HEK293T (cell line): ENCODE measurements at regions of chr22 and their contacts with region 1.

Region 1: DNA sequence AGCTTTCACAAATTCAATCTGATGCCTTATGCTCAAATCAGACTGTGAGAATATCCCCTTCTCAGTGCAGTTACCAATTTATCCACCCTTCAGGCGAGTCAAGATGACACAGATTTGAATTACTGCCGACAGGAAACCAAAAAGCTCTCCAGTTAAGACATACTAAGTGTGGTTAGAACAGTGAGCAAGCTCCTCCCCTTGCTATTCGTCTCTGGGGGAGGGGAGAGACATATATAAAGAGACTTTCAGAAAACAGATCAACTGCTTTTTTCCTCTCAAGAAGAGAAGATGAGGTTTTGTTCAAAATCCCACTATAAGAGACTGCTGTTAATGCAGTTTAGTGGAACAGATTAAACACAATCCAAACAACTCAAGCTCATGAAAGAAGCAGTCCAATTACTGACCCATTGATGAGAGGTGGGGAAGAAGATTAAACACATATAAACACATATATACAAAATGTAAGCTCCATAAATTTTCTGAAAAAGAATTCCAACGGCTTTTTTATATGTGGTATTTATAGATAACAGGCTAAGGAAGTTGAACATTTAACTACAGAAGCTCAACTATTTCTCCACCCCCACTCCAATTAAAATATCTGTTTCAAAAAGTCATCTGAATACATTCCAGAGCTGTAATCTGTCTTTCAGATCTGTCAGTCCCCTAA is 102.7 kb downstream of the MRTFA start:
- DNase-seq: peak; percentile 45

Region 2: DNA sequence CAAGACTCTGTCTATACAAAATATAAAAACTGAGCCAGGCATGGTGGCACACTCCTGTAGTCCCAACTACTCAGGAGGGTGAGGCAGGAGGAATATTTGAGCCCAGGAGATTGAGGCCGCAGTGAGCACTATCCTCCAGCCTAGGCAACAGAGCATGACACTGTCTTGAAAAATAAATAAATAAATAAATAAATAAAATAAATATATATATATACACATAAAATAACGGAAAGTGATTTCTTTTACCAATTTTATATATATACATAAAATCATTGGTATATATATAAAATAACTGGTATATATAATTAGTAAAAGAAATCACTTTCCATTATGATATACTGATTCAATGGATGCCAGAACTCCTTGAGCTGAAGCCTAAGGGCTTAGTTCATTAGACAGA is 10.9 kb after region 1 on chr22:
- CTCF ChIA-PET with region 1: no interaction called
- POLR2A ChIA-PET with region 1: no interaction called
- DNase-seq: no peak

Region 3: DNA sequence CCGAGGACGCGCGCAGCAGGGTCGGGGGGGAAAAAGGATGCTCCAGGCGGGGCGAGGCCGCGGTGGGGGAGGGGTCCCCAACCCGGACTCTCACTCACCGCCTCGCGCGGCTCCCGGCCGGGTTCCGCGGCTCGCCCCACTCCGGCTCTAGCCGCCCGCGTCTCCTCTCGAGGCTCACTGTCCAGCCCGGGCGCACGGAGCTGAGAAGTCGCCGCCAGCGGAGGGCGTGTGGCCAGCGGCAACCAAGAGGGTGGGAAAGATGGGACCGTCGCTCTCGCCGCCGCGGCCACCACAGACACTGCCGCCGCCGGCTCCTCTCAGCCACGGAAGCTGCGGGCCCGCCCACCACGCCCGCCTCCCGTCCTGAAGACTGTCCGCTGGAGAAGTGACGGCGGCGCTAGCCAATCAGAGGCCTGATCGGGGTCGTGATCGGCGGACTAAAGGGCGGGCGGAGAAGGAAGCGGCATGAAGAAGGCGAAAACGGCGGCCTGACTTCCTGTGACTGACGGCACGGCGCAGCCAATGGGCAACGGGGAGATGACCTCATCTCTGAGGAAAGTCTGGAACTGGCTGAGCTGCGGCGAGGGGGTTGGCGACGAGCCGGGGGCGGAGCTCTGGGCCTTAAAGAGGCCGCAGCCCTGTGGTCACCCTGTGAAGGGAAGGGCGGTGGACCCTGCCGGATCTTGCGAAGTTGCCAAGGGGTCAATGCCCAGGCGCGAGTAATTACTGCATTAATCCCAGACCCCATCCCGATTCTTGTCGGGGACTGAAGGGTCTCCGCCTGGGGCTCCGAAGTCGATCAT is 102.7 kb after region 1 on chr22 and contains the start of gene MRTFA:
- CTCF ChIA-PET with region 1: no interaction called
- POLR2A ChIA-PET with region 1: interaction called, 28 read pairs
- DNase-seq: peak; percentile 99